A673 (cell line): ENCODE measurements at regions of chr4 and their contacts with region 1.

Region 1: DNA sequence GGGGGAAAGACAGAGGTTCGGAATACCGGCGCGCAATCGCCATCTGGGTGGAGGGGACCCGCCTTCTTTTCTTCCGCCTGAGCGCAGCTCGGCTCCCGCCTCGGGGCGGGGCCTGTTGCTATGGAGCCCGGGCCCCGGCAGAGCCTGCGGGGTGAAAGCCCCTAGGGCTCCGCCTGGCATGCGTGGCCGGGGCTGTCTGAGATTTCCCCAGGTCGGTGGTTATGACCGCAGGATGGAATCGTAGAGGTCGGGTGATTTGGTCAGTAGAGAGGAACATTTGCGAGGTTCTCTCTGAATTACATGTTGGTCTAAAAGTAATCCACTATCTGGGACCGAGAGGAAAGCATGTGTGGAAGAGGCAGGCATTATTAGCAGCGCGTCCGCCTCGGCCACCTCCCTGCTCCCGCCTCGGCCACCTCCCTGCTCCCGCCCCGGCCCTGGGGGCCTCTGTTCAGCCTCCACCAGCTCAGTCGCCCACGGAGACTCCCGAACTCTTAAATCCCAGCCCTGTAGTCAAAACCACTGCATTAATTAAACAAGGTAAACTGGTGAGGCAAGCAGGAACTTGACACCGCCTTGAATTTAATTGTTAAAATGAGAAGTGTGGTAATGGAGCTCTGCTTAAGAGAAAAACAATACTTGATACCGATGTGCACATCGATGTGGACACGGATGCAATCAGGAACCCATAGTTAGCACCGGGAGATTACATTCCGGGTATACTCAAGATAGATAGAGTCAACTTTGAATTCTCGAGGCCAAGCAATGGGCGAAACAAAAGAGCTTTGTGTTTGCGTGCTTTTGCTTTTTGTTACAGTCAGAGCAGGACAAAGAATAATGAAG is 45.2 kb downstream of the TRIM2 start:
- DNase-seq: peak; percentile 94
- H3K4me3 ChIP-seq: peak overlapping the region; percentile 55
- H3K27ac ChIP-seq: peak overlapping the region; percentile 80
- H3K4me1 ChIP-seq: peaks cover 33% of the 10 kb centered on the region
- H3K27me3 ChIP-seq: no peaks in the 10 kb centered on the region
- CTCF ChIP-seq: no peak

Region 2: GRCh38 chr4:153198719-153199118 is 50.7 kb before region 1 on chr4:
- CTCF ChIA-PET with region 1: interaction called, 10 read pairs
- POLR2A ChIA-PET with region 1: no interaction called
- intact Hi-C with region 1: no loop called
- DNase-seq: no peak
- H3K4me3 ChIP-seq: no peak overlapping the region
- H3K27ac ChIP-seq: no peak overlapping the region
- H3K4me1 ChIP-seq: no peaks in the 10 kb centered on the region
- H3K27me3 ChIP-seq: no peaks in the 10 kb centered on the region
- CTCF ChIP-seq: no peak